ENCODE measurements at regions of chr12 and their contacts with region 1.

Region 1: GRCh38 chr12:6614513-6615172 is 7.5 kb upstream of the CHD4 start:
- DNase-seq: no peak
- ATAC-seq: no peak
- H3K4me3 ChIP-seq: no peak overlapping the region
- H3K27ac ChIP-seq: peak overlapping the region; percentile 72
- H3K4me1 ChIP-seq: peaks cover 13% of the 10 kb centered on the region
- H3K27me3 ChIP-seq: peaks cover 0 to 4% (median 0%) of the 10 kb centered on the region in 3 donors
- CTCF ChIP-seq: no peak

Region 2: GRCh38 chr12:6423267-6424007 is 191.2 kb before region 1 on chr12:
- intact Hi-C with region 1: no loop called
- DNase-seq: peak; percentile 86 to 91
- ATAC-seq: peak; percentile 98 to 99 (median 98)
- H3K4me3 ChIP-seq: no peak overlapping the region
- H3K27ac ChIP-seq: peak overlapping the region; percentile 54
- H3K4me1 ChIP-seq: peaks cover 8% of the 10 kb centered on the region
- H3K27me3 ChIP-seq: no peaks in the 10 kb centered on the region
- CTCF ChIP-seq: peak; percentile 87

Region 3: DNA sequence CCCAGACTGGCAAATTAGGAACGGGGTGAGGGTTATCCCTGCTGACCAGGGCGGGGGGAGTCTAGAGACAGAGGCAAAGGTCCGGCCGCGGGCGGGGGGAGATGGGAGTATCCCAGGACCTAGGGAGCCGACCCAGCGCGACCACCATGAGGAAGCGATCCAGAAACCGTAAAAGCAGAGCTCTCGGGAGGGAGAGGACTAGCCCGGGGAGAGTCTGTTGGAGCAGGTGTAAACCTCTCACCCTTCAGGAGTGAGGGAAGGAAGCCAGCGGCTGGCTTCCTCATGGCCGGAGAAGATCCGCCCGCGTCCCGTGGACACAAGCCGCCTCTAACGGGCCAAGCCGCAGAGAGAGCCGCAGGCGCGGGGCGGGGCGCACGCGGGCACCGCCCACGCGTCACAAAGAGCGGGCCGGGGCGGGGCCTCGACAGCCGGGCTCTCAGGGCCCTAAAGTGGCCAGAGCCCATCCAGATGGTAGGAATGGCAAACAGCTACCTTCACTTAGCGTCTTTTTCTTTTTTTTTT is 32.5 kb after region 1 on chr12 and contains the start of gene ACRBP:
- intact Hi-C with region 1: no loop called
- DNase-seq: peak; percentile 81 to 90
- ATAC-seq: peak; percentile 93 to 98 (median 95)
- H3K4me3 ChIP-seq: peak within 1 kb of the TSS; percentile 67
- H3K27ac ChIP-seq: peak within 1 kb of the TSS; percentile 46
- H3K4me1 ChIP-seq: no peaks in the 10 kb centered on the region
- H3K27me3 ChIP-seq: no peaks in the 10 kb centered on the region
- CTCF ChIP-seq: no peak
- total RNA-seq, gene ACRBP: 0.44 to 0.99 (median 0.86) TPM

Region 4: GRCh38 chr12:6662906-6663742 is 48.5 kb after region 1 on chr12 and contains the start of gene ING4:
- intact Hi-C with region 1: loop called (anchors 5 kb)
- DNase-seq: peak; percentile 97 to 98
- ATAC-seq: peak; percentile 100
- H3K4me3 ChIP-seq: peak within 1 kb of the TSS; percentile 77
- H3K27ac ChIP-seq: peak within 1 kb of the TSS; percentile 86
- H3K4me1 ChIP-seq: peaks cover 11% of the 10 kb centered on the region
- H3K27me3 ChIP-seq: no peaks in the 10 kb centered on the region
- CTCF ChIP-seq: no peak
- total RNA-seq, gene ING4: 12.7 to 29.6 (median 16.9) TPM

Region 5: DNA sequence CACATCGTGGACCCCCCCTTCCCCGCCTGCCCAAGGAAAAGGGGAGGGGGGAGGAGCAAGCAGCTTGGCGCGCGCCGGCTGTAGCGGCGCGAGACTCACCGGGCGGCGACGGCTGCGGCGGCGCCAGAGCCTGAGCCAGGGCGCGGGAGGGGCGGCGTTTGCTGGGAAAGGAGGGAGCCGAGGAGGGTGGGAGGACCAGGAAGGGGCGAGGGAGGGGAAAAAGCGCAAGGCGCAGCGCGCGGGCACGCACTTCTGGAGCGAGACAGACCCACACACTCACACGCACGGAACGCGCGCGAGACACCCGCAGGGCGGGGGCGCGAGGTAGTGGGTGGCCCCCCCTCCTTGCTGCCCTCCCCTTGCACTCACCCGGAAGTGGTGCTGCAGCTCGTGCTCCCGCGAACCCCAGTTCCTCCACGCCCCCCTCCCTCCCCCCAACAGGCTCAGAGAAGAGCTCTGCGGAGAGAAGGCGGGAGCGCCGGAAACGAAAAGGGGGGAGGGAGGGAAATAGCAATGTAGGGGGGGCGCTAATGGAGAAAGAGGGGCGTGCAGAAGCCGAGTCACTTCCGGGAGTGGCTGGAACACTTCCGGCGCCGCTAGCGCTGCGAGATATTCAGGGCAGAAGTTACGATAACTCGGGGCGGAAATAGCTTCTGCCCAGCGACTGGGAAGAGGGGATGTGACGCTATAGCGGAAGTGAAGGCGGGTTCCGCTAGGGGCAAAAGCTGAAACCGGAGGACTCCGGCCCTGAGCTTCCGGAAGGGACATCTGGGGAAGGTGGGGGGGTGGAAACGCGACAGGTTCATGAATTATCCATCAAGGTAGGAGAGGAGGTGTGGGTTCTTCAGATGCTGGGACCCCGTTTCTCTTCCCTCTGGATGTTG is 74.6 kb after region 1 on chr12 and contains the start of gene ZNF384:
- intact Hi-C with region 1: loop called in 1 of 2 experiments (anchors 5 kb)
- DNase-seq: peak; percentile 96 to 98
- ATAC-seq: peak; percentile 90 to 92 (median 92)
- H3K4me3 ChIP-seq: peak within 1 kb of the TSS; percentile 79
- H3K27ac ChIP-seq: peak within 1 kb of the TSS; percentile 99
- H3K4me1 ChIP-seq: peaks cover 21% of the 10 kb centered on the region
- H3K27me3 ChIP-seq: no peaks in the 10 kb centered on the region
- CTCF ChIP-seq: peak; percentile 6
- total RNA-seq, gene ZNF384: 25.4 to 37.9 (median 27.9) TPM

Region 6: DNA sequence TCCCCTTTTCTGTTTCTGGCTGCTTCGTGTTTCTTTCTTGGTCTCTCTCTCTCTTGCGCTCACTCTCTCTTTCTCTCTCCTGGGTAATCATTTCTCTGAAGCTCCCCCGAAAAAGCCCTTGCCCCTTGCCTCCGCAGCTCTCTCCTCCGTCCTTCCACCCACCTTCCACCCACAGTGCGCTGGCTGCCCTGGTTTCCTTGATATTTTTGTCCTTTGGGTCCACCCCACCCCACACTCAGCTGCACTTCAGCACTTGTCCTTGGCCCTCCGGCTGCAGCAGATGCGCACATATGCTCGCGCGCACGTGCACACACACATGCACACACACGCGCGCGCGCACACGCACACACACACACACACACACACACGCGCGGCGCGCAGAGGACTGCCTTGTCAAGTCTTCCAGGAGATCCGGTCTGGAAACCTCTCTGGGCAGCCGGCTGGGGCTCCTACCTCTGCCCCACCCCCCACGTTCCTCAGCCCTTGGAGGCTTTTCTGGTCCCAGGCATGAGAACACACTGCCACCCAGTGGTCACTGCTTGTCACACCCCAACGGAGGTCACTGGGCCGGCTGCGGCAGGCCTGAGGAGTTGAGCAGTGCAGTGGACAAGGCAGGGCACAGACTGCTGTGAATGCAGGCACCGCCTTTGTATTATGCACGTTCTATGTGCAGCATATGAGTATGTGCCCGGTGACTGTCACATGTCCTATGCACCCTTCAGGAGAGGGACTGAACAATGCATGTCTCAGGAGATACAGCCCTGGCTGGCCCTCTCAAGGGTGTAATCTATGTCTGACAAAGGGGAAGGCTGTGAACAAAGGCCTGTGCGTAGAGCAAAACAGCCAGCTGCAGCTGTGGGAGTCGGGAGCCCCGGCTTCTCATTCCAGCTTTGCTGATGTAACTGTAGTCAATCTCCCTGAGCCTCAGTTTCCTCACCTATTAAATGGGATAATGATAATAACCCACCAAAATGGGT is 164.2 kb after region 1 on chr12:
- intact Hi-C with region 1: loop called in 1 of 2 experiments (anchors 2 kb)
- DNase-seq: peak; percentile 94 to 97
- ATAC-seq: peak; percentile 98 to 99 (median 99)
- H3K4me3 ChIP-seq: peak overlapping the region; percentile 65
- H3K27ac ChIP-seq: peak overlapping the region; percentile 68
- H3K4me1 ChIP-seq: peaks cover 5% of the 10 kb centered on the region
- H3K27me3 ChIP-seq: peaks cover 0 to under 1% (median 0%) of the 10 kb centered on the region in 3 donors
- CTCF ChIP-seq: peak; percentile 96

Region 7: GRCh38 chr12:6796576-6796975 is 181.9 kb after region 1 on chr12:
- intact Hi-C with region 1: no loop called
- DNase-seq: no peak
- ATAC-seq: no peak
- H3K4me3 ChIP-seq: no peak overlapping the region
- H3K27ac ChIP-seq: no peak overlapping the region
- H3K4me1 ChIP-seq: no peaks in the 10 kb centered on the region
- H3K27me3 ChIP-seq: peaks cover 0 to 10% (median 2%) of the 10 kb centered on the region in 3 donors
- CTCF ChIP-seq: no peak

Region 8: DNA sequence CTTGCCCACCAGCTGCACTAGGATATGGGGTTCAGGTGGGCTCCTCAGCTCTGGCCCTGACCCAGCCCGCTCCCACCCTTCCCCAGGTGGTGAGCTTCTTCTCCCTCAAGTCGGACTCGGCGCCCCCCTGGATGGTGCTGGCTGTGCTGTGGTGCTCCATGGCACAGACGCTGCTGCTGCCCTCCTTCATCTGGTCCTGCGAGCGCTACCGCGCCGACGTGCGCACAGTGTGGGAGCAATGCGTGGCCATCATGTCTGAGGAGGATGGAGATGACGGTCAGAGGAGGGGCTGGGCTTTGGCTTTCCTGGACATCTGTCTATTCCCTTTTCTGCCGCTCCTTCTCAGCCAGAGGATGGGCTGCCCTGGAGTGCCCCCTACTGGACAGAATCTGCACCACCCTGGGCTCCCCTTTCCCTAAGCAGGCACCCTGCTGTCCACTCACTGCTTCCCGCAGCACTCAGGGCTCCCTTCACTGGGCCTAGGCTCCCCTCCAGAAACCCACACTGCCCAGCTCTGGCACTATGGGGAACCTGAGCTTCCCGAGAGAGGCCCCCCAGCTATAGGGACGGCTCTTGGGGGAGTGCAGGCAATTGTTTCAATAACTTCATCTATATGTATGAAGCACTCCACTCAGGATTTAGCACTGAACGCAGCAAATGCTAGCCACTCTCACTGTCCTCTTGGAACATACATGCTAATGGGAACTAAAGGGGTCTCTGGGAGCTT is 210.9 kb after region 1 on chr12:
- intact Hi-C with region 1: loop called in 1 of 2 experiments (anchors 5 kb)
- DNase-seq: peak; percentile 83 to 89
- ATAC-seq: peak; percentile 79 to 83 (median 82)
- H3K4me3 ChIP-seq: no peak overlapping the region
- H3K27ac ChIP-seq: no peak overlapping the region
- H3K4me1 ChIP-seq: peaks cover 3% of the 10 kb centered on the region
- H3K27me3 ChIP-seq: peaks cover 0 to 70% (median 15%) of the 10 kb centered on the region in 3 donors
- CTCF ChIP-seq: peak; percentile 87

Region 9: DNA sequence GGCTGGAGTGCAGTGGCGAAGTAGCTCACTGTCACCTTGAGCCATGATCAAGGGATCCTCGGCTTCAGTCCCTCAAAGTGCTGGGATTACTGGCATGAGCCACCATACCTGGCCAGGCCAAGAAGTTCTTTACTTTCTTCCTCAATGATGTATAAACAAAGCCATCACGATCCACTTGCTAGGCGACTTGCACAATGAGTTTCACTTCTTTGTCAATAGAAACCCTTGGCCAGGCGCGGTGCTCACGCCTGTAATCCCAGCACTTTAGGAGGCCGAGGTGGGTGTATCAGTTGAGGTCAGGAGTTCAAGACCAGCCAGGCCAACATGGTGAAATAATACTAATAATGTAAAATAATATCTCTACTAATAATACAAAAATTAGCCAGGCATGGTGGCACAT is 272.8 kb after region 1 on chr12:
- intact Hi-C with region 1: no loop called
- DNase-seq: no peak
- ATAC-seq: no peak
- H3K4me3 ChIP-seq: no peak overlapping the region
- H3K27ac ChIP-seq: no peak overlapping the region
- H3K4me1 ChIP-seq: no peaks in the 10 kb centered on the region
- H3K27me3 ChIP-seq: no peaks in the 10 kb centered on the region
- CTCF ChIP-seq: no peak

Measured in psoas muscle (tissue), 8 donors.